ENCODE measurements at regions of chr19 and their contacts with region 1.

Region 1: GRCh38 chr19:7829561-7830271 is at the start of gene EVI5L:
- DNase-seq: peak; percentile 99
- H3K4me3 ChIP-seq: peak within 1 kb of the TSS in 1 of 2 donors; percentile 50
- H3K4me3 Mint-ChIP-seq: peak within 1 kb of the TSS; percentile 76 to 88 (median 86)
- H3K27ac ChIP-seq: peak within 1 kb of the TSS; percentile 36
- H3K27ac Mint-ChIP-seq: peak within 1 kb of the TSS; percentile 63 to 90 (median 87)
- H3K4me1 ChIP-seq: peaks cover 22% of the 10 kb centered on the region
- H3K4me1 Mint-ChIP-seq: peaks cover 11 to 28% (median 18%) of the 10 kb centered on the region in 4 donors
- H3K27me3 ChIP-seq: no peaks in the 10 kb centered on the region
- H3K27me3 Mint-ChIP-seq: no peaks in the 10 kb centered on the region
- total RNA-seq, gene EVI5L: 11.9 to 14.1 TPM

Region 2: DNA sequence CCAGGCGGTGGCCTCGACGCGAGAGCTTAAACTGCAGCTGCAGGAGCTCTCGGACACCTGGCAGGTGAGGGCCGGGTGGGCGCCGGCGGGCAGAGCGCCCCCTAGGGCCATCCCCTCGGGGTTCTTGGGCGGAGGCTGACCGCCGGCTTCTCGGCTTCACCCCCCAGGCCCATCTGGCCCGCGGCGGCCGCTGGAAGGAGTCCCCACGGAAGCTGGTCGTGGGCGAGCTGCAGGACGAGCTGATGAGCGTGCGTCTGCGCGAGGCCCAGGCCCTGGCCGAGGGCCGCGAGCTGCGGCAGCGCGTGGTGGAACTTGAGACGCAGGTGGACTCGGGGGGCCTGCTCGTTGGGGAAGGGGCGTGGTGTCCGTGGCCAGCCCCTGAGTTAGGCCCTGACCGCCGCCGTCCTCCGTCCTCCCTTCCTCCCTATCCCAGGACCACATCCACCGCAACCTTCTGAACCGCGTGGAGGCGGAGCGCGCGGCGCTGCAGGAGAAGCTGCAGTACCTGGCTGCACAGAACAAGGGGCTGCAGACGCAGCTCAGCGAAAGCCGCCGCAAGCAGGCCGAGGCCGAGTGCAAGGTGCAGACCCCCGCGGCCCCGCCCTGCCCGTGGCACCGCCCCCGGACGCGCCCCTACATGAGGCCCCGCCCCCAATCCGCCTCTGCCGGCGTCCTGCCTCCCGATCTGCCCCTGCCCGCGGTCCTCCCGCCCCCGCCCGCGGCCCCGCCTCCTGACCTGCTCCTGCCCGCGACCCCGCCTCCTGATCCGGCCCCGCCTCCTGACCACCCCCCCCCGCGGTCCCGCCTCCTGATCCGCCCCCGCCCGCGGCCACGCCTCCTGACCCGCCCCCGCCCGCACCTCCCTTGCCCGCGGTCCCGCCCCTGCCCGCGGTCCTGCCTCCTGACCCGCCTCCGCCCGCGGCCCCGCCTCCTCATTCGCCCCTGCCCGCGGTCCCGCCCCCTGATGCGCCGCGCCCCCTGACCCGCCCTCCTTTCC is 32.5 kb after region 1 on chr19:
- CTCF ChIA-PET with region 1: no interaction called
- POLR2A ChIA-PET with region 1: no interaction called
- intact Hi-C with region 1: loop called (anchors 2 kb)
- DNase-seq: peak; percentile 60 to 78 (median 71)
- H3K4me3 ChIP-seq: peak overlapping the region in 1 of 2 donors; percentile 28
- H3K4me3 Mint-ChIP-seq: peak overlapping the region in 7 of 8 donors; percentile 45 to 80 (median 66)
- H3K27ac ChIP-seq: no peak overlapping the region
- H3K27ac Mint-ChIP-seq: no peak overlapping the region
- H3K4me1 ChIP-seq: peaks cover 25% of the 10 kb centered on the region
- H3K4me1 Mint-ChIP-seq: peaks cover 8 to 21% (median 13%) of the 10 kb centered on the region in 4 donors
- H3K27me3 ChIP-seq: peaks cover 7% of the 10 kb centered on the region
- H3K27me3 Mint-ChIP-seq: no peaks in the 10 kb centered on the region

Region 3: DNA sequence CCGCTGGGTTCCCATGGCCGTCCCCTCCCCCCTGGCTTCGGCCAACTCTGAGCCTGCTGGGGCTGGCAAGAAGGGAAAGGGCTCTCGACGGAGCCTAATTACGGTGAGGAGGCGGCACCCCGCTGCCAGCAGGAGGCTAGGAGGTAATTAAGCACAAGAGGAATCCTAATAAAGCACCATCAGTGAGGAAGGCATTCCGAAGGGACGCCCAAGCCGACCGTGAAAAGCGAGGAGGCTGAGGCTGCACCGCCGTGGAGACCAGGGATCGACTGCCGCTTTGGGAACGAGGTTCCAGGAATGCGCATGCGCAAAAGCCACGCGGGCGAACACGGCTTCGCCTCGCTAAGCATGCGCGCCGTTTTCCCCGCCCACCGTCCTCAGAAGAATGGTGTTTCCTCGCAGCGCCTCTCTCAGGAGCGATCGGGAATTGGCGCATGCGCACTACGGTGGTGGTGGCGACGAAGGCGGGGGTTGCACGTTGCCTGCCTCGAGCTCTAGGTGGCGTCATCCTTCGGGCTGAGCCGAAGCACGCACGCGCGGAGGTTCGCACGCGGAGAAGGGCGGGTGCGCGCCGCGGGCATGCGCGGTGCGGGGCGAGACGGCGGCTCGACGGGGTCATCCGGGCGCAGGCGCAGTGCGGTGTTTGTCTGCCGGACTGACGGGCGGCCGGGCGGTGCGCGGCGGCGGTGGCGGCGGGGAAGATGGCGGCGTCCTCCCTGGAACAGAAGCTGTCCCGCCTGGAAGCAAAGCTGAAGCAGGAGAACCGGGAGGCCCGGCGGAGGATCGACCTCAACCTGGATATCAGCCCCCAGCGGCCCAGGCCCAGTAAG is 73.7 kb after region 1 on chr19 and contains the start of gene MAP2K7:
- CTCF ChIA-PET with region 1: no interaction called
- POLR2A ChIA-PET with region 1: no interaction called
- intact Hi-C with region 1: loop called (anchors 1 kb)
- DNase-seq: peak; percentile 100
- H3K4me3 ChIP-seq: peak within 1 kb of the TSS; percentile 61 to 96
- H3K4me3 Mint-ChIP-seq: peak within 1 kb of the TSS; percentile 88 to 99 (median 90)
- H3K27ac ChIP-seq: peak within 1 kb of the TSS; percentile 83
- H3K27ac Mint-ChIP-seq: peak within 1 kb of the TSS; percentile 94 to 100 (median 97)
- H3K4me1 ChIP-seq: peaks cover 32% of the 10 kb centered on the region
- H3K4me1 Mint-ChIP-seq: peaks cover 15 to 37% (median 26%) of the 10 kb centered on the region in 4 donors
- H3K27me3 ChIP-seq: no peaks in the 10 kb centered on the region
- H3K27me3 Mint-ChIP-seq: peaks cover 2 to 5% of the 10 kb centered on the region in 2 donors
- total RNA-seq, gene MAP2K7: 59.7 to 62.5 TPM

Measured in CD4-positive, alpha-beta memory T cell (primary cell).